PC-9 (cell line): ENCODE measurements at regions of chr5 and their contacts with region 1.

Region 1: GRCh38 chr5:130893006-130893405 is 272.1 kb downstream of the HINT1 start:
- DNase-seq: no peak
- H3K4me3 ChIP-seq: no peak overlapping the region
- H3K27ac ChIP-seq: no peak overlapping the region
- H3K4me1 ChIP-seq: no peaks in the 10 kb centered on the region
- H3K27me3 ChIP-seq: no peaks in the 10 kb centered on the region
- CTCF ChIP-seq: no peak

Region 2: DNA sequence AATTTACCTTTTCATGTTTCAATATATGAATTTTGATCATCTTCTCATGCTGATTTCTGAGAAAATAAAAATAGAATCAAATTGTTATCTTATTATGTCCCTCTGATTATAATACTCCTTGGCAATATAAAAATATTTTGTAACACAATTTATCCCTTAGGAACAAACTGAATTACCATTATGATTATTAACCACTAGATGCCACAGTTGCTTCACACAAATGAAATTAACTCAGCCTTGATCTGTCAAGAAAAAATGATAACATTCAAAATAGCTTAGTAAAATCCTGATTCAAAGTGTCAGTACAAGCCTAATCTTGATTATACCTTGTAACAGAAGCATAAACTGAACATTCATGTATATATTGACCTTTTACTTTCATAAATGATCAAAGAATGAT is 993.6 kb before region 1 on chr5:
- CTCF ChIA-PET with region 1: no interaction called
- POLR2A ChIA-PET with region 1: no interaction called
- intact Hi-C with region 1: no loop called
- DNase-seq: no peak
- H3K4me3 ChIP-seq: no peak overlapping the region
- H3K27ac ChIP-seq: no peak overlapping the region
- H3K4me1 ChIP-seq: no peaks in the 10 kb centered on the region
- H3K27me3 ChIP-seq: peaks cover 10% of the 10 kb centered on the region
- CTCF ChIP-seq: peak; percentile 52; the same call in 1 of the 2 replicates

Region 3: DNA sequence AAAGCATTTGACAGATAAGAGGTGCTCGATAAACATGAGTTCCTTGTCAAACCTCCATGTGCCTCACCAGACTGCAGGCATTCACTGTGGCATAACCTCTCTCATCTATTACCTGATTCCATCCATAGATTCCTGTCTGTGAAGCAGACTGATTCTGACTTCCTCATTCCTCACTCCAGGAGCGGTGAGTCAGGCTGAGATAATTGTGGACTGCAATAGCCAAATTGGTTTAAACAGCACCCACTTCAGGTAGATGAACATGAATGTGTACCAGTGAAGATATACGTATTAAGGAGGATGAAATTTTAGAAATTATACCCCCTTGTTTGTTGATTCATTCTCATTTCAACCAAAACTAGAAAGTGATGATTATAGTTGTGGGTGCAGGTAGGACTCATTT is 119.2 kb before region 1 on chr5:
- CTCF ChIA-PET with region 1: no interaction called
- POLR2A ChIA-PET with region 1: no interaction called
- intact Hi-C with region 1: loop called (anchors 10 kb)
- DNase-seq: peak; percentile 60 to 83
- H3K4me3 ChIP-seq: no peak overlapping the region
- H3K27ac ChIP-seq: 0 out of 2 replicates have a peak overlapping the region, but pooled peaks have one; percentile 6
- H3K4me1 ChIP-seq: 0 out of 2 replicates have a peak, but pooled peaks cover 5% of the 10 kb centered on the region
- H3K27me3 ChIP-seq: no peaks in the 10 kb centered on the region
- CTCF ChIP-seq: peak; percentile 34; the same call in 1 of the 2 replicates